ENCODE measurements at regions of chr12 and their contacts with region 1.

Region 1: DNA sequence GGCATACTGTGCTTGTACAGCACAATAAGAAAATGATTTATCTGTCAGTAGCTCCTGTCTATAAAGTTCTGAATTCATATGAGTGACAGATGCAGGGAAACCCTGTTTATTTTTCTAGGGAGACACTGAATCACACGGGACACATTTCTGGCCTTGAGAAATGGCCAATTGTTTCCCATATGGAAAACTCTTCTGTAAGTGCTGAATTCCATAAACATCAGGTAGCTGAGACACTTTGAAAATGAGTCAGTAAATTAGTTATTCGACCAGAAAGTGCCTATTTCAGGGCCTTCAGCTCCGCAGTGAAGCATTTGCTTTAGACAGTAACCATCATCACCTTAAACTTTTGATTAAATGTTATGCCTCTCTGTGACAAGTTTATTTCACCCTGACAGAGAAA is 184.4 kb downstream of the TMEM132D start:
- DNase-seq: no peak
- H3K4me3 ChIP-seq: no peak overlapping the region
- H3K27ac ChIP-seq: no peak overlapping the region
- H3K4me1 ChIP-seq: no peaks in the 10 kb centered on the region
- H3K27me3 ChIP-seq: no peaks in the 10 kb centered on the region
- CTCF ChIP-seq: no peak
- POLR2A ChIP-seq: no peak

Region 2: GRCh38 chr12:129152351-129153104 is 566.9 kb before region 1 on chr12:
- intact Hi-C with region 1: loop called (anchors 5 kb)
- DNase-seq: no peak
- H3K4me3 ChIP-seq: no peak overlapping the region
- H3K27ac ChIP-seq: no peak overlapping the region
- H3K4me1 ChIP-seq: no peaks in the 10 kb centered on the region
- H3K27me3 ChIP-seq: no peaks in the 10 kb centered on the region
- CTCF ChIP-seq: no peak
- POLR2A ChIP-seq: no peak